Body of pancreas (tissue), 4 donors: ENCODE measurements at regions of chr16 and their contacts with region 1.

Region 1: DNA sequence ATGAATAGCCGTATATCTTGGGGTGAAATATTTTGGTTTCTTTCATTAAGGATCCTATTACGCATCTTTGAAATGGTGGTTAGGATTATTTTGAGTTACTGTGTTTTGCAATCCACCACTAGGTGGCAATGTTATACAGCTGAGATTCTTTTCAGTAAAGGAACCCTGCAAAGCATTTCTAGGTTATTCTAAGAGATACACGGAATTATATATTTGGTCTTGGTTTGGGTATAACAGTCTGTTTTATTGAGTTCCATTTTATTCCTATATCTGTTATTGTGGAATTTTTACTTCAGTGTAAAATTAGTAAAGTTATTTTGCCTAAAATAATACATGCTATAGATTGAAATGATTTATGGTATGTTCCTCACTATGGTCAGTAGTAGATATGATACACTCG is 62.9 kb upstream of the CPHXL start:
- DNase-seq: peak in 1 of 4 donors; percentile 27
- ATAC-seq: peak; percentile 62
- H3K4me3 ChIP-seq: no peak overlapping the region
- H3K27ac ChIP-seq: no peak overlapping the region
- H3K4me1 ChIP-seq: no peaks in the 10 kb centered on the region
- H3K27me3 ChIP-seq: no peaks in the 10 kb centered on the region
- CTCF ChIP-seq: peak in 6 of 7 experiments; percentile 78 to 94 (median 82)
- POLR2A ChIP-seq: no peak

Region 2: DNA sequence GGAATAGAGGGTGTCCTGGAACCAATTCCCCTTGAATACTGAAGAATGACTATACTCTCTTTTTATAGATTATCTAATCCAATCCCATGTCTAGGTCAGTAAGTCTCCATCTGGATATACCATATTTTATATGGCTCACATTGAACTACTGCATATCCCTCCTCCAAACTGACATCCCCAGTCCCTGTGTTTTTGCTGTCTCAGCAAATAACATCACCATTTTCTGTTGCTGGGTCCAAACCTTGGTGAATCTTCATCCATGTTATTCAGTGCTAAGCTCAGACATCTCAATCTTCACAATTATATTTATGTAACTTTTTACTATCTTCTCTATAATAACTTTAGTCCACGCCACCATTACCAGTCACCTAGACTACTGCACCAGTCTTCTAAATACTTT is 218.4 kb after region 1 on chr16:
- intact Hi-C with region 1: no loop called
- DNase-seq: no peak
- ATAC-seq: no peak
- H3K4me3 ChIP-seq: no peak overlapping the region
- H3K27ac ChIP-seq: no peak overlapping the region
- H3K4me1 ChIP-seq: no peaks in the 10 kb centered on the region
- H3K27me3 ChIP-seq: no peaks in the 10 kb centered on the region
- CTCF ChIP-seq: no peak
- POLR2A ChIP-seq: no peak

Region 3: DNA sequence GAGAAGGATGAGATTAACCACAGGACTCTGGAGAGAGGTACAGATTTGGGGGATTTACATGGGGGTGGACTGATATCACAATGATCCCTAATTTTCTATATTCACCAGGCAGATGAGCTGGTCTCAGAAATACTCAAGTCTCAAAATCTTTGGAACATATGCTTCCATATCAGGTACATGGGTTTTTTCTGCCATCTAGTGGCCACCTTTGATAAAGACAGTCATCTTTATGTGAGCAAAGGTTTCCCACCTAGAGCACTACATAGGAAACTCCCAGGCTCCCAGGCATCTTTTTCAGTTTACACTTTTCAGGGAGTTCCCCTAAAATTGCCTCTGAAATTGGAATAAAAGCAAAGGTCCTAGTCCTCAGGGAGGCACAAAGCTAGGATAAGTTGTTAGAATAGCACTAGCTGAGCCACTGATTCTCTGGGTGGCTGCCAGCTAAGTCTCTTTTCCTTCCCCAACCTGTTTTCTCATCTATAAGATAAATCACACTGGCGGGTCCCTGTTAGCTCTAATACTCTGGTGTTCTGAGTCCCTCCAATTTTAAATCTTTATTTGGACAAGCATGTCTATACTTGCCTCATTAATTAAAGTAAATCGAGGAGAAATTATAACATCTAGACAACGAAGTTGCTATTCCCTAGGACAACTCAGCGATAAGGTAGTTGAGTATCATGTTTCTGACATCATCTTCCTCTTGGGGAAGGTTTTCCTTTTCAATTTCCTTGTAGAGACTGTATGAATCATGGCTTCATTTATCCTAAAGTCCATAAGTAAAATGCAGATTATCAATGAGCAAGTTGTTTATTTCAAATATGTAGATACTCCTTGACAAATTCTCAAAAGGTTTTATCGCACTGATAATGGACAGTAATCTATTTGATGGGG is 1382.8 kb after region 1 on chr16:
- intact Hi-C with region 1: loop called (anchors 5 kb)
- DNase-seq: peak; percentile 13 to 67 (median 40)
- ATAC-seq: peak; percentile 75
- H3K4me3 ChIP-seq: no peak overlapping the region
- H3K27ac ChIP-seq: no peak overlapping the region
- H3K4me1 ChIP-seq: no peaks in the 10 kb centered on the region
- H3K27me3 ChIP-seq: no peaks in the 10 kb centered on the region
- CTCF ChIP-seq: peak; percentile 63 to 82 (median 73)
- POLR2A ChIP-seq: no peak